Activated naive CD8-positive, alpha-beta T cell treated with anti-CD3 and anti-CD28 coated beads, Interleukin-2, amount 10 ng/mL, durations not matched to agents 7 days and 5 days (primary cell): ENCODE measurements at regions of chr21 and their contacts with region 1.

Region 1: DNA sequence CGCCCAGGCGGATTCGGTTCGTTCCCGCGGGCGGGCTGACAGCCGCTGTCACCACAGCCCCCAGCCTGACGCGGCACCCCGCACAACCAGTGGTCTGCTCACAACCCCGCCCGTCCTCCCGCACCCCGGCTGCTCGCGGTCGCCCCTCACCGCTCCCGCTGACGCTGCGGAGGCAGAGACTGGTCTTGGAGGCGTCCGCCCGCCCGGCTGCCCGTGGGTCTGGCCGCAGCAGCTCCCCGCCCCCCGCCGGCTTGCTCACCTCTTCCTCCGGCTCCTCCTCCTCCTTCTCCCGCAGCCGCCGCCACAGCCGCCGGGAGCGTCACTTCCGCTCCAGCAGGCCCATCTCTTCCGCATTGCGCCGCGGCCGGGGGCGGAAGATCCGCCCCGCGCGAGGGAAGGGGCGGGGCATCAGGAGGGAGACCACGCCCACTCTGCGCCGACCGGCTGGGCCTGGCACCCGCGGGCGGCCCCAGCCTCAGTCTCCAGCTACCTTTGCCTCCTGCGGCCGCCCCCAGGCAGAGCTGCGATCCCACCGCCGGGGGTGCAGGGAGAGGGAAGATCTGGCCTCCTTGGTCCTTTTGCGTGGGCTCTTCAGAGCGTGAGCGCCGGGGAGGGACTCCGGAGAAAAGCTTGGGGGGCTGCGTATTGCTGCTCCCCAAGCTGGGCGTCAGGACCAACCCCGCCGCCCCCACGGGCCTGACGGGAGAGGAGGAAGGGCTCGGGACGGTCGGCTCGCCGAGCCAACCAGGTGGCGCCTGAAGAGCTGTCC is at the start of gene SYNJ1:
- DNase-seq: peak; percentile 98
- ATAC-seq: peak; percentile 88
- H3K4me3 Mint-ChIP-seq: peak within 1 kb of the TSS; percentile 98
- H3K27ac Mint-ChIP-seq: peak within 1 kb of the TSS; percentile 97
- H3K4me1 Mint-ChIP-seq: peaks cover 30% of the 10 kb centered on the region
- H3K27me3 Mint-ChIP-seq: no peaks in the 10 kb centered on the region
- total RNA-seq, gene SYNJ1: 17.9 to 20.4 TPM

Region 2: GRCh38 chr21:32666258-32666657 is 61.6 kb before region 1 on chr21:
- POLR2A ChIA-PET with region 1: no interaction called
- DNase-seq: no peak
- ATAC-seq: no peak
- H3K4me3 Mint-ChIP-seq: no peak overlapping the region
- H3K27ac Mint-ChIP-seq: no peak overlapping the region
- H3K4me1 Mint-ChIP-seq: no peaks in the 10 kb centered on the region
- H3K27me3 Mint-ChIP-seq: no peaks in the 10 kb centered on the region

Region 3: GRCh38 chr21:32770871-32771523 is 43.1 kb after region 1 on chr21:
- POLR2A ChIA-PET with region 1: interaction called, 41 read pairs
- DNase-seq: no peak
- ATAC-seq: peak; percentile 48
- H3K4me3 Mint-ChIP-seq: peak overlapping the region; percentile 98
- H3K27ac Mint-ChIP-seq: peak overlapping the region; percentile 92
- H3K4me1 Mint-ChIP-seq: peaks cover 43% of the 10 kb centered on the region
- H3K27me3 Mint-ChIP-seq: no peaks in the 10 kb centered on the region

Region 4: GRCh38 chr21:32886339-32886738 is 158.5 kb after region 1 on chr21:
- POLR2A ChIA-PET with region 1: no interaction called
- DNase-seq: no peak
- ATAC-seq: peak; percentile 70
- H3K4me3 Mint-ChIP-seq: peak overlapping the region; percentile 65
- H3K27ac Mint-ChIP-seq: peak overlapping the region; percentile 67
- H3K4me1 Mint-ChIP-seq: peaks cover 8% of the 10 kb centered on the region
- H3K27me3 Mint-ChIP-seq: peaks cover 9% of the 10 kb centered on the region